Activated CD4-positive, alpha-beta T cell treated with anti-CD3 and anti-CD28 coated beads, Interleukin-2, amount 10 ng/mL, durations not matched to agents 7 days and 5 days (primary cell): ENCODE measurements at regions of chr12 and their contacts with region 1.

Region 1: GRCh38 chr12:1795785-1796514 is 24.4 kb upstream of the LRTM2 start:
- DNase-seq: peak; percentile 94
- H3K4me3 Mint-ChIP-seq: peak overlapping the region; percentile 85
- H3K27ac Mint-ChIP-seq: peak overlapping the region; percentile 94
- H3K4me1 Mint-ChIP-seq: peaks cover 26% of the 10 kb centered on the region
- H3K27me3 Mint-ChIP-seq: no peaks in the 10 kb centered on the region

Region 2: GRCh38 chr12:1634590-1635191 is 161.3 kb before region 1 on chr12:
- CTCF ChIA-PET with region 1: interaction called, 16 read pairs
- POLR2A ChIA-PET with region 1: no interaction called
- DNase-seq: peak; percentile 67
- H3K4me3 Mint-ChIP-seq: no peak overlapping the region
- H3K27ac Mint-ChIP-seq: no peak overlapping the region
- H3K4me1 Mint-ChIP-seq: peaks cover 10% of the 10 kb centered on the region
- H3K27me3 Mint-ChIP-seq: peaks cover 53% of the 10 kb centered on the region

Region 3: DNA sequence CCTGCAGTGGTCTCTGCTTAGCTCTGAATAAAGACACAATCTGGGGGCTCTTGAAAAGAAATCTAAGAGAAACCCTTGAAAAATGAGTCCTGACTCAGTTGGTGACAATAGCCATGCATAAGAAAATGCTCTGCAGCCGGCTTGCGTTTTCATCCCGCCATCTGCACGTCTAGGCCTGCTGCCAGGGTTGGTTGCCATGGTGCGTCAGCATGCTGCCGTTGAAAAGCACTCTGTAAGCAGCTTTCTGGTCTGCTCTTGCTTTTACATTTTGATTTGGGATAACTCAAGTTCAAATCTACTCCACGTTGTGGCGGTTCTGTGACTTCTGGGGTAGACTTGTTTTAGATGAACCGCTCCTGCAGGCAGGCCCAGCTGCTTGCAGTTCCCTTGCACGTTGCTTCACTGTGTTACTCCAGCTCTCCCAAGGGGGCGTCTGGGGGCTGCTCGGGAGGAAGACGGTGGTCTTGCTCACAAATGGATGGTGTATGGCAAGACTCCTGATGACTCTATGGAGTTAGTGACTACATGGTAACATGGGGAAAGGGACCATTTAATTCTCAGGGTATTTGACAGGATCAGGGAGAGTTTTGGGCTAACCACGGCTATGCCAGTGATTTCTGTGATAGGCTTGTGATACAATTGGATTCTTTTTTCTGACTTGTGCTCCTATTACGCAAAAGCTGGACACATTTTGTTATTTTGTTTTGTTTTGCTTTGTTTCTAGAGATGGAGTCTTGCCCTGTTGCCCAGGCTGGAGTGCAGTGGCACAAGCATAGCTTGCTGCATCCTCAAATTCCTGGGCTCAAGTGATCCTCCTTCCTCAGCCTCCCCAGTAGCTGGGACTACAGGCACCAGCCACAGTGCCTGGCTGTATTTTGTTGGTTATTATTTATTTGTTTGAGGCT is 151.2 kb before region 1 on chr12:
- CTCF ChIA-PET with region 1: interaction called, 10 read pairs
- POLR2A ChIA-PET with region 1: no interaction called
- DNase-seq: no peak
- H3K4me3 Mint-ChIP-seq: no peak overlapping the region
- H3K27ac Mint-ChIP-seq: no peak overlapping the region
- H3K4me1 Mint-ChIP-seq: peaks cover 13% of the 10 kb centered on the region
- H3K27me3 Mint-ChIP-seq: peaks cover 23% of the 10 kb centered on the region

Region 4: DNA sequence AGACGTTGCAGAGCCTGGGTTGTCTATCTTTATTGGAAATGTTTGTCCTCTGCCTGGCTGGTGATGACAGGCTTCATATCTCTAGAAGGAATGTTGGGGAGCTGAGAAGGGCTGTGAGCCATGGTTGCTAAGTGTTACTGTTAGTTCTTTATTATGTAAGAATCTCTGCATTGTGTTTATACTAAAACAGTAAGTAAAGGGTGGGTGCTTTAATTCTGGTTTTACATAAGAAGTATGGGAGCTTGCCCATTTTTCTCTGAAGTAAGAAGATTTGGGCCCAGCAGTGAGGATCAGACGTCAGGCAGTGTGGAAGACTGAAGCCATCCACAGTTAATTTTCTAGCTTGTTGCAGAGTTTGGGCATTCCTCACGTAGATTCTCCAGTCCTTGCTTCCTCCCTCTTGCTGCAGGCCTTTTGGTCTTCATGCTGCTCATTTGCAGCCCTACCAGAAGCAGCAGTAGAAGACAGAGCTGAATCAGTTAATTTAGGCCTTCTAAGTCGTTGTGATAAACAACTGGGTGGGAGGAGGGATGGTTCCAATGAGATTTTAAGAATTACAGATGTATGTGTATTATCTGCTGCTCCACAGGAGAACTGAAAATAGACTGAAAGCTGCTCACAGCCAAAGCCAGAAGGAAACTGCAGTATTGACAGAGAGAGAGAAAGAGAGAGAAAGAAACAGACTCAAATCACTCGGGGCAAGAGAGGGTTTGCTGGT is 145.5 kb before region 1 on chr12:
- CTCF ChIA-PET with region 1: interaction called, 61 read pairs
- POLR2A ChIA-PET with region 1: interaction called, 8 read pairs
- DNase-seq: no peak
- H3K4me3 Mint-ChIP-seq: no peak overlapping the region
- H3K27ac Mint-ChIP-seq: no peak overlapping the region
- H3K4me1 Mint-ChIP-seq: peaks cover 9% of the 10 kb centered on the region
- H3K27me3 Mint-ChIP-seq: peaks cover 44% of the 10 kb centered on the region

Region 5: GRCh38 chr12:1661553-1662335 is 134.2 kb before region 1 on chr12:
- CTCF ChIA-PET with region 1: interaction called, 61 read pairs
- POLR2A ChIA-PET with region 1: no interaction called
- DNase-seq: peak; percentile 85
- H3K4me3 Mint-ChIP-seq: peak overlapping the region; percentile 71
- H3K27ac Mint-ChIP-seq: peak overlapping the region; percentile 87
- H3K4me1 Mint-ChIP-seq: peaks cover 34% of the 10 kb centered on the region
- H3K27me3 Mint-ChIP-seq: peaks cover 2% of the 10 kb centered on the region

Region 6: DNA sequence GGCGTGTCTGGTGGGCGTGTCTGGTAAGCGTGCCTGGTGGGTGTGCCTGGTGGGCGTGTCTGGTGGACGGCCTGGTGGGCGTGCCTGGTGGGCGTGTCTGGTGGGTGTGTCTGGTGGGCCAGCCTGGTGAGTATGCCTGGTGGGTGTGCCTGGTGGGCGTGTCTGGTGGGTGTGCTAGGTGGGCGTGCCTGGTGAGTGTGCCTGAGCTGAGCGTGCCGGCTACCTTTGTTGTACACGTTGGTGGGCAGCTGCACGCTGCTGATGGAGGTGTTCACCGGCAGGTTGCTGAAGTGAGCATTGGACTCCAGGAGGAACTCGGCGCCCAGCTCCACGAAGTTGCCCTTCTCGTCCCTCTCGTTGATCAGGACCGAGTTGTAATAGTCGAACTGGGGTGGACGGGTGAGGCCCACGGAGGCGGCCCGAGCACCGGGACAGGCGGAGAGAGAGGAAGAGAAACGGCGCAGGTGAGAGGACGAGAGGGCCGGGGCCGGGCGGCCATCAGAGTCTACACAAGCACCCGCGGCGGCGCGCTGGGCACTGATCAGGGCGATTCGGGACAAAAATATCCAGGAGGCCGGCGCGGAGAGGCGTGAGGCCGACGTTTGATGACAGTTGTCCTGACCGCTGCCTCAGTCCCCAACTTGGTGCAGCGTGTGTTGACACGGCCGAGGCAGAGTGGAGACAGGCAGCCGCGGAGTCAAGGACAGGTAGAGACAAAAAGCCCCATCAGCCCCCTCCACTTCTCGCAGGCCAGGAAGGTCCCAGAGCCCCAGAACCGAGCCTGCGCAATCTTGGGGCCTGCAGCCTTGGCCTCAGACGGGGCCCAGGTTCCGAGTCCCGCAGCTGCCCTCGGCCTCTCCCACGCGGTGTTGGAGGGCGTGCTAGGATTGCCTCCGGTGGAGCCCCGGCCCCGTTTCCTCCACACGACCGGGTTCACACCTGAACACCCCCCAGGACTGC is 112.0 kb after region 1 on chr12:
- CTCF ChIA-PET with region 1: no interaction called
- POLR2A ChIA-PET with region 1: no interaction called
- DNase-seq: no peak
- H3K4me3 Mint-ChIP-seq: no peak overlapping the region
- H3K27ac Mint-ChIP-seq: no peak overlapping the region
- H3K4me1 Mint-ChIP-seq: peaks cover 4% of the 10 kb centered on the region
- H3K27me3 Mint-ChIP-seq: peaks cover 26% of the 10 kb centered on the region

Region 7: DNA sequence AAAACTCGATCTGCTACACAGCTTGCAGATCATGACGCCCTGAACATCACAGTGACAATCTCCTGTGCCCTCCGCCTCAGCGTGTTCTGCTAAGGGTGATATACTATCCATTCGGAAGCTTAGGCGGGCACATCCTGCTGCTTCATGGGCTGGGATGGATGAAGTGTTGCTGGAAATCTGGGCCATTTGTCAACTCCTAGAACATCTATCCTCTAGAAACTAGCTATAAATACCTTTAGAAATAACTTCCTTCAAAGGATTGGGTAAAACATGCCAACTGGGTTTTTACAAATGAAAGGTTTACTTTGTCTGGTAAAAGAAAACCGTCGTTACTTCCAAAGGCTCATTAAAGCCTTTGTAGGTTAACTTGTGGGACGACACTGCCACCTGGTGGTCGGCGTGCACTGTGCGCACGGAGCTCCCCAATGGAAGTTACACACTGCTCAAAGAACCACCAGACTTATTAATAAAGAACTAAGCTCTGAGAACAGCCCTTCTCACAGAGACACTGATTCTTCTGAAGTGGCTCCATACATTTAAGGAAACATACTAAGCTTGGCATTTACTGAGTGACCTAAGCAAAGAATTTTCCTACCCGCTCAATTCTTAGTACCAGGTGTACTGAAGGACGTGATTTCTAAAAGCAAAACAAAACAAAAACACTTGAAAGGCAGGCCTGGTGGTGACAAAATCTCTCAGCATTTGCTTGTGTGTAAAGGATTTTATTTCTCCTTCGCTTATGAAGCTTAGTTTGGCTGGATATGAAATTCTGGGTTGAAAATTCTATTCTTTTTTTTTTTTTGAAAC is 144.1 kb after region 1 on chr12:
- CTCF ChIA-PET with region 1: interaction called, 66 read pairs
- POLR2A ChIA-PET with region 1: interaction called, 5 read pairs
- DNase-seq: peak; percentile 91
- H3K4me3 Mint-ChIP-seq: no peak overlapping the region
- H3K27ac Mint-ChIP-seq: peak overlapping the region; percentile 78
- H3K4me1 Mint-ChIP-seq: peaks cover 4% of the 10 kb centered on the region
- H3K27me3 Mint-ChIP-seq: no peaks in the 10 kb centered on the region